AG04450 (cell line): ENCODE measurements at regions of chr1 and their contacts with region 1.

Region 1: DNA sequence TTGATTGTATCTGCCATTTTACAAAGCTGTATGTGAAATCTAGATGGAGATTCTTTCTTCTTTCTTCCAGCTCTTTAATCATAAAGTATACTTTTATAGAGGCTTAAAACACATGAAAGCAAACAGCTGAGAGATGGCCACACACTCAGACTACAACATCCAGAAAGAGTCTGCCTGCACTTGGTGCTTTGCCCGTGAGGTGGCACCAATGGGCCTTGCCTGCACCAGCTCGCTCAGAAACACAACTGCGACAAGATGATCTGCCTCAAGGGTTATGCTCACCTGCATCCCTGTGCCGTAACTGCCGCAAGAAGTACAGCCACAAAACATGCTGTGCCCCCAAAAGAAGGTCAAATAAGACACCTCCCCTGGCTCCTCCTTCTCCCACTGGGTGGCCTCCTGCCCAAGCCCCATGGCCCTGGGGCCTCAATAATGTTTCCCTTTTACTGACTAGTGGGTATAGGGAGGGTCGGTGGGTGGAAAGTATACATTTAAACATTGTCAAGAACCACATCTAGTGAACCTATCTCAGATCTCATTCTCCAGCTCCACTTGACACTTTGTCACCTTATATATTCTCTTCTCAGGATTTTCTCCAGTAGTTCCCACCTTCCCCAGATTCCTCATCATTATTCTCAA is 66.7 kb upstream of the ANGPTL3 start:
- DNase-seq: peak; percentile 6
- H3K4me3 ChIP-seq: no peak overlapping the region
- H3K27ac ChIP-seq: no peak overlapping the region
- H3K27me3 ChIP-seq: no peaks in the 10 kb centered on the region
- CTCF ChIP-seq: peak; percentile 77

Region 2: DNA sequence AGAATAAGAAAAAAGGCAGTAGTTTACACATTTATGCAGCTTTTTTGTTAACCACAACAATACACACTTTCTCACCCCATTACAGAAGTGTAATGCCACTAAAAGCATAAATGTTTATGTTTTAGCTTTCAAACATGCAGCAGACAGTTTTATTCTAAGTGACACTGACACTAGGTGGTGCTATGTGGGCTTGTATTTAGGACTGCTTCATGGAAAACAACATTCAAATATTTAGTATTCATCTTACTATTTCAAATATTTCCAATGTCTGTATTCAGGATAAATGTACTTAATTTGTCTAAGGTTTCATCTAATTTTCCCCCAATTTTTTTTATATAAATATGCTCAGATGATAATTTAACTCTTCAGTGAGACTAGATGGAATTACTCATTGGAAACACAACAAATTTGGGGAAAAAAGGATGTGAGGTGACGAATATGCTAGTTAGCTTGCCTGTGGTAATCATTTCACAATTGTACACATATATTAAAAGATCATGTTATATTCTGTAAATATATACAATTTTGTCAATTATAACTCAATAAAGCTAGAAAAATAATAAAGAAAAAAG is 22.4 kb before region 1 on chr1:
- CTCF ChIA-PET with region 1: interaction called, 15 read pairs
- POLR2A ChIA-PET with region 1: no interaction called
- DNase-seq: peak; percentile 11
- H3K4me3 ChIP-seq: no peak overlapping the region
- H3K27ac ChIP-seq: no peak overlapping the region
- H3K27me3 ChIP-seq: no peaks in the 10 kb centered on the region
- CTCF ChIP-seq: peak; percentile 67

Region 3: GRCh38 chr1:62514746-62515423 is 15.8 kb before region 1 on chr1:
- CTCF ChIA-PET with region 1: interaction called, 14 read pairs
- POLR2A ChIA-PET with region 1: no interaction called
- DNase-seq: no peak
- H3K4me3 ChIP-seq: no peak overlapping the region
- H3K27ac ChIP-seq: no peak overlapping the region
- H3K27me3 ChIP-seq: no peaks in the 10 kb centered on the region
- CTCF ChIP-seq: no peak

Region 4: DNA sequence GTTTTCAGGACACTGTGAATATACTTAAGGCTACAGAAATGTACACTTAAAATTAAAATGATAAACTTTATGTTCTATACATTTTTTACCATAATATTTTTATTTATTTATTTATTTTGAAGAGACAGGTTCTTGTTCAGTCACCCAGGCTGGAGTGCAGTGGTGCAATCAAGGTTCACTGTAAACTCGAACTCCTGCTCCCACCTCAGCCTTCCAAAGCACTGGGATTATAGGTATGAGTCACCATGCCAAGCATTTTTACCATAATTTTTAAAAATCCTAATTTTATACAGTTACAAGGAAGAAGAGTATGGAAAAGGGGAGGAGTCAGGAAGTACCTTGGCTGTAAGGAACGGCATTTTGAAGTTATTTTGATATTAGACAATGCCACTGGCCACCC is 43.0 kb after region 1 on chr1:
- CTCF ChIA-PET with region 1: no interaction called
- POLR2A ChIA-PET with region 1: no interaction called
- DNase-seq: no peak
- H3K4me3 ChIP-seq: no peak overlapping the region
- H3K27ac ChIP-seq: no peak overlapping the region
- H3K27me3 ChIP-seq: no peaks in the 10 kb centered on the region
- CTCF ChIP-seq: no peak

Region 5: DNA sequence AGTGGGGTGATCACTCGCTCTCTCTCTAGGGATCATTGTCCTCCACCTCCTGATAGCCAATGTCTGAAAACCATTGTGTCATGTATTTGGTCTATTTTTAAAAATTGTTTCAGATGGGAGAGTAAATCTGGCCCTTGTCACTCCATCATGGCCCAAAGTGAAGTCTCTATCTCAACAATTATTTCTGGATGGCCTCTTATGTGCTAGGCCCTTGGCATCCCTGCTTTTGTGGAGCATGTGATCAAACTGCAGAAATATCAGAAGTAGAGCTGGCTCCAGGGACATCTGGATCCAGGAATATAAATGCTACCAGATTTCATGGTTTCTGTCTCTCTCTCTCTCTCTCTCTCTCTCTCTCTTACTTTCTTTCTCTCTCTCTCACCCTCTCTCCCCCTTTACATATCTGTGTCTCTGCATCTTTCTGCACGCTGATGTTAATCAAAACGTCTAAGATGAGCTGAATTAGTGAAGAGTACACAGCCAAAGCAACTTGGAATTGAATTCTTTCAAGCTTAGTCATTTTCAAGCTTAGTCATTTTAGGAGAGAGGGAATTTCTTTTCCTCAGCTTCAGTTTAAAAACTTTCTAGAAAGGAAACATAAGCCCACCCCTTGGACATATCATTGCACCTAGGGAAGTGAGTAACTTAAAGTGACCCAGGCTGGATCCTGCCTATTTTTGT is 205.0 kb after region 1 on chr1:
- CTCF ChIA-PET with region 1: interaction called, 27 read pairs
- POLR2A ChIA-PET with region 1: no interaction called
- DNase-seq: peak; percentile 27
- H3K4me3 ChIP-seq: no peak overlapping the region
- H3K27ac ChIP-seq: no peak overlapping the region
- H3K27me3 ChIP-seq: no peaks in the 10 kb centered on the region
- CTCF ChIP-seq: no peak